CD8-positive, alpha-beta T cell (primary cell): ENCODE measurements at regions of chr5 and their contacts with region 1.

Region 1: GRCh38 chr5:140647042-140647341 is 438 bp downstream of the NDUFA2 start:
- DNase-seq: no peak
- ATAC-seq: no peak
- H3K4me3 ChIP-seq: peak overlapping the region; percentile 78 to 81
- H3K4me3 Mint-ChIP-seq: peak overlapping the region; percentile 99
- H3K27ac ChIP-seq: peak overlapping the region; percentile 96 to 97
- H3K27ac Mint-ChIP-seq: peak overlapping the region; percentile 99
- H3K4me1 ChIP-seq: peaks cover 34% of the 10 kb centered on the region
- H3K4me1 Mint-ChIP-seq: peaks cover 47% of the 10 kb centered on the region
- H3K27me3 ChIP-seq: no peaks in the 10 kb centered on the region
- H3K27me3 Mint-ChIP-seq: no peaks in the 10 kb centered on the region
- CTCF ChIP-seq: no peak

Region 2: DNA sequence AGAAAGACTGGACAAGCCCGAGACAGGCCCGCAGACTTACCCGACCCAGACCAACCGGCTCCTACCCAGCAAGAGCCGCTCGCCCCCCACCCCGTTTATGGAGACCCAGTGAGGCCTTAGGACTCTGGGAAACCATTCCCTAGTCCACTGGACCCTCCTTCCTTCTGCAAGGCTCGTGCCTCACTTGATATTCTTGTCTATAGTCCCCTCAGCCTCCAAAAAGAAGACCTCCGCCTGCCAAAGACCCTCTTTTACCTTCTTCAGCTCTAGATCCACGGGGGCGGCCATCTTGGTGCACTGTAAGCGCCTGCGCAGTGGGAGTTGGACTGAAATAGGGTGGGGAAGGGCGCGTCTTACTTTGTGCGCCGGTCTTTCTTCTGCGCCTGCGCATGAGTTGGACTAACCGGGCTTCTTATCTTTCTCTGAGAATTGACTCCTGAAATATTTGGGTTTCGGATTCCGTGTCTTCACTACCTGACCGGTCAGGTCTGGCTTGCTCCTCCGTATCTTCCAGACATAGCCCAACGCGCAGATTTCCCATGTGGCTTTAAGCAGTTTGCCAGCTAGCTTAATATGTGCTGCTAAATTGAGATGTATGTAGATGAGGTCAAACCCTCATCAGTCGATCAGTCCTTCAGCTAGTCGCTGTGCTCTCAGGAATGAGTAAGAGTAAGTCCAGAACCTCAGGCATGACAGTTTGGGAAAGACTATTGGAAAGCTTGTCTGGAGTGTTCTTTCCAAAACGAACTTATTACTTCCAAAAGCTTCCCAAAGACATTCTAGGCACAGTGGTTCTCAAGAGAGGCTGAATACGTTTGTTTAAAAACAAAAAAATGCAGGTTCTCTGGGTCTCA is 344.0 kb before region 1 on chr5 and contains the start of gene PFDN1:
- CTCF ChIA-PET with region 1: no interaction called
- POLR2A ChIA-PET with region 1: no interaction called
- intact Hi-C with region 1: loop called in 1 of 2 experiments (anchors 5 kb)
- DNase-seq: peak; percentile 77 to 97 (median 90)
- ATAC-seq: peak; percentile 100
- H3K4me3 ChIP-seq: peak within 1 kb of the TSS; percentile 73 to 87
- H3K4me3 Mint-ChIP-seq: peak within 1 kb of the TSS; percentile 99
- H3K27ac ChIP-seq: peak within 1 kb of the TSS; percentile 61 to 82
- H3K27ac Mint-ChIP-seq: peak within 1 kb of the TSS; percentile 98
- H3K4me1 ChIP-seq: peaks cover 14% of the 10 kb centered on the region
- H3K4me1 Mint-ChIP-seq: peaks cover 29% of the 10 kb centered on the region
- H3K27me3 ChIP-seq: no peaks in the 10 kb centered on the region
- H3K27me3 Mint-ChIP-seq: peaks cover 4% of the 10 kb centered on the region
- CTCF ChIP-seq: no peak
- total RNA-seq, gene PFDN1: 28.4 to 30.5 TPM

Region 3: DNA sequence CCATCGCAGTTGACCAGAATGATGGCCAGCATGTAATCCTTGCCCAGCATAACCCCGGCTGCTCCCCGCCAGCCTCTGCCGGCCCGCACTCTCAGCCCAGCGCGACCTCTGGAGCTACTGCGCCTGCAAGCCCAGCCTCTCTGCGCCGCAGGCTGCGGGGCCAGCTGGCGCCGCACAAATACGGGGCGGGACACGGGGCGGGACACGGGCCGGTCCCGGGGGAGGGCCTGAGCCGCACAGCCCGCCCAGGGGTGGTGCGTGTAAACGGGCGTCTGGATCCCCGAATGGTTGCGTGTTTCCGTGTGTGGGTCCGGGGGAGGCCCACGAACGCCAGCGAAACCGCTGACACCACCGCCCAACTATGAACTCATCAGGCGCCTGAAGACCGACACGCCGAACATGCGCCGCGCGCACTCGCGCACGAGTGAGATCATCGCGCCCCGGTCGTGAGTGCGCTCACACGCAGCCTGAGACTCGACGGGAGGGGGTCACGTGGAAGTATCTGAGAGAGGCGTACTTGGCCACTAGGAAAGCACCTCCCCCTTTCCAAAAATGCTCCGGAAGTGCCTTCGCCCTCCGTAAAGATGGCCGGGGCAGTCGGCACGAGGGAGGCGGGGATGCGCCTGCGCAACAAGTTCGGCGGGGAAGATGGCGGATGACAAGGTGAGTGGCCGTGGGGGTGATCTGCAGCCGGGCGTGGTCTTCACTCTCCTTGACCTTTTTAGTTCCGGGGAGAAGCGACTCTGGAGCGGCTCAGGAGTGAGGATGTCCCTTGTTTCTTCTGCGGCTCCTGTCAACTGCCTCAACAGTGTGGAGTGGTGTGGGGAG is 82.6 kb before region 1 on chr5 and contains the starts of genes APBB3 and SLC35A4:
- CTCF ChIA-PET with region 1: no interaction called
- POLR2A ChIA-PET with region 1: interaction called, 11 read pairs
- intact Hi-C with region 1: loop called (anchors 1 kb)
- DNase-seq: peak; percentile 92 to 100 (median 95)
- ATAC-seq: peak; percentile 88
- H3K4me3 ChIP-seq: peak within 1 kb of the TSS; percentile 52 to 79
- H3K4me3 Mint-ChIP-seq: peak within 1 kb of the TSS; percentile 88
- H3K27ac ChIP-seq: peak within 1 kb of the TSS; percentile 73 to 92
- H3K27ac Mint-ChIP-seq: peak within 1 kb of the TSS; percentile 94
- H3K4me1 ChIP-seq: peaks cover 30% of the 10 kb centered on the region
- H3K4me1 Mint-ChIP-seq: peaks cover 62% of the 10 kb centered on the region
- H3K27me3 ChIP-seq: no peaks in the 10 kb centered on the region
- H3K27me3 Mint-ChIP-seq: no peaks in the 10 kb centered on the region
- CTCF ChIP-seq: no peak
- total RNA-seq, gene APBB3: 51.0 to 51.7 TPM
- total RNA-seq, gene SLC35A4: 14.8 to 19.4 TPM

Region 4: GRCh38 chr5:140664359-140665119 is 17.5 kb after region 1 on chr5 and contains the start of gene WDR55:
- CTCF ChIA-PET with region 1: interaction called, 3 read pairs
- POLR2A ChIA-PET with region 1: interaction called, 36 read pairs
- intact Hi-C with region 1: loop called (anchors 1 kb)
- DNase-seq: peak; percentile 90 to 98 (median 97)
- ATAC-seq: peak; percentile 92
- H3K4me3 ChIP-seq: peak within 1 kb of the TSS; percentile 80 to 95
- H3K4me3 Mint-ChIP-seq: peak within 1 kb of the TSS; percentile 89
- H3K27ac ChIP-seq: peak within 1 kb of the TSS; percentile 90 to 91
- H3K27ac Mint-ChIP-seq: peak within 1 kb of the TSS; percentile 96
- H3K4me1 ChIP-seq: peaks cover 15% of the 10 kb centered on the region
- H3K4me1 Mint-ChIP-seq: peaks cover 38% of the 10 kb centered on the region
- H3K27me3 ChIP-seq: no peaks in the 10 kb centered on the region
- H3K27me3 Mint-ChIP-seq: no peaks in the 10 kb centered on the region
- CTCF ChIP-seq: no peak
- total RNA-seq, gene WDR55: 45.4 to 49.2 TPM

Region 5: DNA sequence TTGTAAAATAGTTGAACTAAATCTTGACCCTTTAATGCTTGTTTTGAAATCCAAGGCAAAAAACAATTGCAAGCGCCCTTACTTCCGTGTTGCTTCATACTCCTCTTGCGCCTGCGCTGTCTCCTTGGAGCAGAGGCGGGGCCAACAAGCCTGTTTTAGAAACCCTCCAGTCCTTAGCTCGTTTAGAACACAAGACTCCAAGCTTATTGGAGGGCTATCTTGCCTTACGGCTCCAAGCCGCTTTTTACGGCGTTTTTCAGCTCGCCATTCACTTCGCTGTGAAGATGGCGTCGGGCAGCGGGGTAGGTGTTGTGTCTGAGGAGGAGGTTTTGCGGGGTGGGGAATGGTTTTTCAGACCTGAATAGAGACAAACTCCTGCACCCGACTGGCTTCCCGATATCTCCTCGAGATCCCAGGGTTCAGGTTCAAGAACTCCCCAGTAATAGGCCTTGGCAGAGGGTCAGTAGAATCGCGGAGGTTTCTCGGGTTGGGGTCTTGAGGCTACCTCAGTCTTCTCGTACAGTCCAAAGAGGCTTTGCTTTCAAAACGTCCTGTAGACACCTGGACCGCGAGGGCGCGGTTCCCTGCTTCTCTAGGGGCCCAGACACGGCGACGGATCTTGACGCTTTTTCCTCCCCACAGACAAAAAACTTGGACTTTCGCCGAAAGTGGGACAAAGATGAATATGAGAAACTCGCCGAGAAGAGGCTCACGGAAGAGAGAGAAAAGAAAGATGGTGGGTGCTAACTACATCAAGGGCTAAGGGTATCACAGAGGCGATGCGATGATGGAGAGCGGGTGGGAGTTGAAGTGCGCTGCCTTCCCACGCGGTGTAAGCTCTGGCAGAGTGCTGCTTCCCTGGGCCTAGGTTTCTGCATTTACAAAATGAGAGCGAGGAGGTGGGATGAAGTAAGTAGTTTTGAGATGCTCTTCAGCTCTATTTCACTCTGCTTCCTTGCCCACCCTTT is 53.5 kb after region 1 on chr5 and contains the start of gene ZMAT2:
- CTCF ChIA-PET with region 1: interaction called, 4 read pairs
- POLR2A ChIA-PET with region 1: interaction called, 9 read pairs
- intact Hi-C with region 1: loop called in 1 of 2 experiments (anchors 1 kb)
- DNase-seq: peak; percentile 84 to 98 (median 91)
- ATAC-seq: peak; percentile 99
- H3K4me3 ChIP-seq: peak within 1 kb of the TSS; percentile 66 to 72
- H3K4me3 Mint-ChIP-seq: peak within 1 kb of the TSS; percentile 95
- H3K27ac ChIP-seq: peak within 1 kb of the TSS; percentile 66 to 78
- H3K27ac Mint-ChIP-seq: peak within 1 kb of the TSS; percentile 96
- H3K4me1 ChIP-seq: peaks cover 13% of the 10 kb centered on the region
- H3K4me1 Mint-ChIP-seq: peaks cover 29% of the 10 kb centered on the region
- H3K27me3 ChIP-seq: no peaks in the 10 kb centered on the region
- H3K27me3 Mint-ChIP-seq: no peaks in the 10 kb centered on the region
- CTCF ChIP-seq: no peak
- total RNA-seq, gene ZMAT2: 31.8 to 36.6 TPM

Region 6: GRCh38 chr5:140926443-140927227 is 279.6 kb after region 1 on chr5:
- CTCF ChIA-PET with region 1: no interaction called
- POLR2A ChIA-PET with region 1: no interaction called
- intact Hi-C with region 1: no loop called
- DNase-seq: peak in 3 of 9 experiments; percentile 6 to 18 (median 9)
- ATAC-seq: no peak
- H3K4me3 ChIP-seq: peak overlapping the region; percentile 15 to 27
- H3K4me3 Mint-ChIP-seq: peak overlapping the region; percentile 57
- H3K27ac ChIP-seq: no peak overlapping the region
- H3K27ac Mint-ChIP-seq: no peak overlapping the region
- H3K4me1 ChIP-seq: no peaks in the 10 kb centered on the region
- H3K4me1 Mint-ChIP-seq: peaks cover 8% of the 10 kb centered on the region
- H3K27me3 ChIP-seq: peaks cover 5 to 20% of the 10 kb centered on the region in 2 experiments
- H3K27me3 Mint-ChIP-seq: peaks cover 46% of the 10 kb centered on the region
- CTCF ChIP-seq: no peak